Gastrocnemius medialis (tissue), 4 donors: ENCODE measurements at regions of chr11 and their contacts with region 1.

Region 1: DNA sequence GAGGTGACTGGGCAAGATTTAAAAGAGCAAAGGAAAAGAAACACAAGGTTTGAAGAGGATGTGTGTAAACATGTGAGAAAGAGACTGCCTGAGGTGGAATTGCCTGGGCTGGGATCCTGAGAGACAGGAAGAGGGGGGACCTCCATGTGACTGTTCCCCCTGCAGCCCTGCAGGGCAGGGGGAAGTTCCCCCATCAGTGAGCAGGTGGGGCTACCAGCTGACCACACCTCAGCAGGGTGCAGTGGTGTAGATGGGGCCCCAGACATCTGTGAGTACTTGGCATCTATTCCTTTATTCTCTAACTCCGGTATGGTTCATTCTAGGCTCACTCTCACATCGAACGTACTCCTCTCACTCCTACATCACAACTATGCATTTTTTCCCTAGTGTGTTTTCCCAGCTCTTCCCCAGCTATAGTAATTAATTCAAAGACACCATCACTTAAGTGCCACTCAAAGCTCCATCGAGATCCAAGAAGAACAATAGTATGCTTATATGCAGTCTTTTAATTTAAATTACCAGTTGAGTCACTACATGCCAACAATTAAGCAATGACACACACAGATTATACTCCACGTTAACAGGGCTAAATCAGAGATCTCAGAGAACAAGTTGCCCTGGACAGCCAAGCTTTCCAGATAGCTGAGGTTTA is 42.7 kb downstream of the LGR4 start:
- DNase-seq: no peak
- ATAC-seq: no peak
- H3K4me3 ChIP-seq: no peak overlapping the region
- H3K27ac ChIP-seq: no peak overlapping the region
- H3K4me1 ChIP-seq: peaks cover 15 to 18% of the 10 kb centered on the region in 2 donors
- H3K27me3 ChIP-seq: no peaks in the 10 kb centered on the region
- CTCF ChIP-seq: no peak
- POLR2A ChIP-seq: no peak

Region 2: GRCh38 chr11:27296497-27296896 is 133.4 kb before region 1 on chr11:
- in situ Hi-C with region 1: no loop called
- intact Hi-C with region 1: no loop called
- DNase-seq: no peak
- ATAC-seq: peak; percentile 71 to 84
- H3K4me3 ChIP-seq: no peak overlapping the region
- H3K27ac ChIP-seq: no peak overlapping the region
- H3K4me1 ChIP-seq: no peaks in the 10 kb centered on the region
- H3K27me3 ChIP-seq: no peaks in the 10 kb centered on the region
- CTCF ChIP-seq: peak; percentile 39 to 69 (median 55)
- POLR2A ChIP-seq: no peak

Region 3: DNA sequence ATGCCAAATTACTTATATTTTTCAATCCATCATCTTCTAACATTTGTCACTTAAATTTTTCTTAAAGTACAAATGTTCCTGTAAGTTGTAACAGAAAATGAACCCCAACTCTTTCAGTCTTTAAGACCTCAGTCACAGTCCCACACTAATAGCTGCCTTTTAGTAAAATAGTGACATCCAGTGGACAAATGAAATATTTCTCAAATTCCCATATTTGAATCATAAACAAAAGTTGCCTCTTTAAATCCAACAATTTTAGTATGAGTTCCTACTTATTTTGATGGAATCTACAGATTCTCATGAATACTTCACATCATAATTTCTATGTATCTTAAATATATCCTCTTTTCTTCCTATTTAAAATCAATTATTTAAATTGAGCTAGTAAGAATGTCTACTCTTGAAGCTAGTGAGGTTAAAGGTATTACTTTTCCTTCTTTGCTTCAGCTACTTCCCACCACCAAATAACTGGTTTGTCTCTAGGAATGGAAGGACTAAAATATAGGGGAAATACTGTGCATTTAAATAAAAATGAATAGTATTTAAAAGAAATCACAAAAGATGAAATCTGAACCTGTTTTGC is 67.5 kb after region 1 on chr11:
- in situ Hi-C with region 1: loop called in 1 of 4 experiments (anchors 10 kb)
- intact Hi-C with region 1: no loop called
- DNase-seq: no peak
- ATAC-seq: no peak
- H3K4me3 ChIP-seq: no peak overlapping the region
- H3K27ac ChIP-seq: no peak overlapping the region
- H3K4me1 ChIP-seq: peaks cover 20 to 22% of the 10 kb centered on the region in 2 donors
- H3K27me3 ChIP-seq: no peaks in the 10 kb centered on the region
- CTCF ChIP-seq: peak in 2 of 5 experiments; percentile 30 to 48
- POLR2A ChIP-seq: no peak